OCI-LY7 (cell line): ENCODE measurements at regions of chr4 and their contacts with region 1.

Region 1: GRCh38 chr4:140851032-140851636 is 94.9 kb upstream of the TBC1D9 start:
- DNase-seq: peak; percentile 86
- H3K4me3 ChIP-seq: no peak overlapping the region
- H3K27ac ChIP-seq: no peak overlapping the region
- H3K4me1 ChIP-seq: peaks cover 27% of the 10 kb centered on the region
- CTCF ChIP-seq: peak; percentile 100

Region 2: DNA sequence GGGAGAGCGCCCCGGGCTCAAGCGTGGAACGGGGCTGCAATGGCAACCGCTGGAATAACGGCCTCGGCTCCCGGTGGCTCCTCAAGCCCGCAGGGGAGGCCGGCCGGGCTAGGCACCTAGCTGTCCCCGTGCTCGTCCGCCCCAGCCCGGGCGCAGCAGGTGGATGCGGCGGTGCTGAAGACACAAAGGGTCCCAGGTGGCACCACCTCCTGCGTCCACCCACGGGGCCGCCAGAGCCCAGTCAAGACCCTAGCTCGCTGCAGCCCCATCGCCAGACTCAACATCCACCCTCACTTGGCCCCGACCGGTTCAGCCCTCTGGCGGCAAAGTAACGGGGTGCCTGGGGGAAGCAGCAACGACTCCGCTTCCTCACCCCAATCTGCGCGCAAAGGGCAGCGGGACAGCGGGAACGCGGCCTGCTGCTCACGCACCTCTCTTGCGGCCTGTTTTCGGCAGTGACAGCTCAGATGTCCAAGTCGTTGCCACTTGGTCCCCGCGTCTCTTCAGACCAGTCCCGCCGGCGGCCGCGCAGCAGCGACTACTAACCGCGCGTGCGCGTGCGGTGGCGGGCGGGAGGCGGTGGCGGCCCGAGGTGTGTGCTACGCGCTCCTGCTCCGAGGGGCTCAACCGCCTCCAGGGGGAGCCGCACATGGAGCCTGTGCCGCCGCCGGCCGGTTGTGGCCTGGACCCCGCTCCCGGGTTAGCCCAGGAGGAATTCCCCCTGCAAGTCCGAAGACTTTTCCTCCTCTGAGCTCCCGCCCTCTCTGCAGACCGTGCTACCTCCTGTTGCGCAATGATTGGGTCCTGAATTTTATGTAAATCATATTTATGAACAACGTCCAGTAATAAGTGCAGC is 423.8 kb before region 1 on chr4 and contains the start of gene CLGN:
- CTCF ChIA-PET with region 1: no interaction called
- POLR2A ChIA-PET with region 1: no interaction called
- intact Hi-C with region 1: loop called (anchors 2 kb)
- DNase-seq: peak; percentile 82
- H3K4me3 ChIP-seq: peak within 1 kb of the TSS; percentile 72
- H3K27ac ChIP-seq: no peak within 1 kb of the TSS
- H3K4me1 ChIP-seq: peaks cover 10% of the 10 kb centered on the region
- CTCF ChIP-seq: peak; percentile 78
- total RNA-seq, gene CLGN: 1.1 and 1.3 TPM in 2 replicates

Region 3: DNA sequence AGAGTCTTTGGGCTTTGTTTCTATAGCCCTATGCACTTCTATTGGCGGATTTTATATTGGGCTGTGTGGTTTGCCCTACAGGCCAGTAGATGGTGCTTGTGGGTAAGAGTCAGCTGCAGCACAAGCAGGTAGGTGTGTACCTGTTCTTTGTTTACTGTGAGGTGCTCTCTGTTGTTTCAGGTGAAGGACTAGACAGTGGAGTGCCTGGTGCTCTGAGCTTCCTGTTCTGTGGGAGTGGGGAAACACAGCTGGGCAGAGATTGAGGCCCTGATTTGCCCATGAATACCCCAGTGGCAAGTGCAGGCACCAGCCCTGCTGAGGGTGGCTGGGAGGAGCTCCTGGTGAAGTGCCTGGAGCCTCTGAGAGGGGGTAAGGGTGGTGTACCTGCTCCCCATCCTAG is 256.1 kb before region 1 on chr4:
- CTCF ChIA-PET with region 1: no interaction called
- POLR2A ChIA-PET with region 1: interaction called, 8 read pairs
- intact Hi-C with region 1: loop called (anchors 1 kb)
- DNase-seq: peak; percentile 73
- H3K4me3 ChIP-seq: no peak overlapping the region
- H3K27ac ChIP-seq: no peak overlapping the region
- H3K4me1 ChIP-seq: peaks cover 2% of the 10 kb centered on the region
- CTCF ChIP-seq: peak; percentile 87

Region 4: DNA sequence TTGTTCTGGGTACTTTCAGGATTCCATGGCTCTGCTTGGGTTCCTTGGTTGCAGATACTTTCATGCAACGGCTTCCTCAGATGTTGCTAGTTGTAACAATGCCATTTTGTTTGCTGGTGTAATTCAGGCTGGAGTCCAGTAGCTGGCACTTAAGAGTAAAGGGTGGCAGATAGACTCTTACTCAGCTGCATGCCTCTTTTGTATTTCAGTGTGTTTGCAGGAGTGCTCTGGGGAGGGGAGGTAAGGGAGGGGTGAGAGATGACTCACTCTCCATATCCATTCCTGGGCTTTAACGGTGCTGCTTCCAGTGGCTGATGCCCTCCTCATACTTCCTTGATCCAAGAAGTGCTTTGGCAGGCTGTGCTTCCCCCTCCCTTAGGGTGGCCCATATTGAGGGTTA is 524.7 kb after region 1 on chr4:
- CTCF ChIA-PET with region 1: no interaction called
- POLR2A ChIA-PET with region 1: no interaction called
- intact Hi-C with region 1: no loop called
- DNase-seq: no peak
- H3K4me3 ChIP-seq: no peak overlapping the region
- H3K27ac ChIP-seq: no peak overlapping the region
- H3K4me1 ChIP-seq: no peaks in the 10 kb centered on the region
- CTCF ChIP-seq: no peak